ENCODE measurements at regions of chr3 and their contacts with region 1.

Region 1: GRCh38 chr3:57100046-57100695 is 39.7 kb downstream of the SPATA12 start:
- DNase-seq: peak; percentile 75
- CTCF ChIP-seq: peak; percentile 91

Region 2: DNA sequence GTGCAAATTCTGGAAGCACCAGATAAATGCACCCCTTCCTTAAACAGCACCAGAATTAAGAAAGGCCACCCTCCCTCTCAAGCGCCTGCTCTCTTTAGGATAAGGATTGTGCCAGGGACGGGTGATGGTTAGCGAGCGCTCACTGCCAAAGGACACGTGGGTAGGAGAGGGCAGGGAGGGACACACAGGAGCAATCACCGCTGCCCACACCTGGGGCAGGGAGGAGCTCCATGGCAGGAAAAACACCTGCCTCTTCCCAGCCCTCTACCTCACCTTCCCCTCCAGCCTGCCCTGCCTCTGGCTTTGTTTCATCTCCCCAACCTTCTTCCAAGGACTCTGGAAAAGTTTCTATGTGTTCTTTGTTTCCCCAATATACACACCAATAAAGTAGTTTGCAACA is 47.0 kb before region 1 on chr3:
- CTCF ChIA-PET with region 1: no interaction called
- POLR2A ChIA-PET with region 1: no interaction called
- DNase-seq: no peak
- CTCF ChIP-seq: no peak

Region 3: DNA sequence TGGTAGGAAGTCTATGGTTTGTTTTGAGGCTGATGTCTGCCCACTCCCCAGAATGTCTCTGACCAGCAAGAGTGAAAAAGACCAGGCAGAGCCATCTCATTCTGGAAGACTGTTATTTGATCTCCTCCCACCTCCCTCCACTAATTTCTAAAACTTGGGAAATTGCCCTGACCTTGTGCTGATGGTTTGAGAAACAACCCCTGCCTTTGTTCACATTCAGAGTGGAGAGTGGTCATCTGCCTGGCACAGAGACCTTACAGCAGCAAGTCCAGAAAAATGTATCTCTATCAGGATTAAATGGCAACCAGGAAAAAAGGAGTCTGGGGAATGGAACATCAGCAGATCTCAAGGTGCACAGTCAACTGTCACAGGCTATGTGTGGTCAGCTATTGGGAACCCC is 14.0 kb before region 1 on chr3:
- CTCF ChIA-PET with region 1: interaction called, 15 read pairs
- POLR2A ChIA-PET with region 1: no interaction called
- DNase-seq: no peak
- CTCF ChIP-seq: no peak

Region 4: DNA sequence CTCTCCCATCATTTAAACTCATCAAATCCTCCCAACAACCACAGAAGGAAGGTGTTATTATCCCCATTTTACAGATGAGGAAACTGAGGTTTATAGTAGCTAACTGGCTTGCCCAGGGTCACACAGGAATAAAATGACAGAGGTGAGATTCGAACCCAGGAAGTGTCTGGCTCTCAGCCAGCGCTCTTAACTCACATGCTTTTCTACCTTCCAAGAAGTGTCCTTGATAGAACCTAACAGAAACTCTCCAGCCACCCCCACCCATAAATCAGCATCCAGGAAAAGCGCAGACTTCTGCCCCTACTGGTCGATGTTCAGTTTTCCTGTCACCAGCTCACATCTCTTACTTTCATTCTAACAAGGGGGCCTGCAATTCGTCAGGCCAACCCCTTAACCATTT is 12.0 kb after region 1 on chr3:
- CTCF ChIA-PET with region 1: interaction called, 30 read pairs
- POLR2A ChIA-PET with region 1: no interaction called
- DNase-seq: peak; percentile 29
- CTCF ChIP-seq: peak; percentile 7

Region 5: DNA sequence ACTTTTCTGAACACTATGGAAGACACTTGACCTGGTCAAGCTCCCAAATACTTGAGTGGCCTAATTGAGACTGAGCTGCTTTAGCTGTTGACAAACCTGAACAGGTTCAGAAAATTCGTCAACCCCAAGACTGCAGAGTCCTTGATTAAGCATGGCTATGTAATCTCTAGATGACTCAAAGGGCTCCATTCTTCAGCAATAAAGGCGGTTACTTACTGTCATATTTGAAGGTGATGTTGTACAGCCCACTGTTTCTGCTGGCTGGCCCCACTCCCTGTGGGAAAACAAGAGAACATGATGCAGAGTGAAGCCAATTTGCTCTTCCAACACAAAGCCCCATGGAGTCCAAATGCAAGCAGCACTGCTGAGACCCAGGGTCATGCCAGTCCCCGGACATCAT is 19.9 kb after region 1 on chr3:
- CTCF ChIA-PET with region 1: interaction called, 12 read pairs
- POLR2A ChIA-PET with region 1: no interaction called
- DNase-seq: no peak
- CTCF ChIP-seq: no peak

Measured in GM10248 (cell line).